HEK293T (cell line): ENCODE measurements at regions of chr1 and their contacts with region 1.

Region 1: DNA sequence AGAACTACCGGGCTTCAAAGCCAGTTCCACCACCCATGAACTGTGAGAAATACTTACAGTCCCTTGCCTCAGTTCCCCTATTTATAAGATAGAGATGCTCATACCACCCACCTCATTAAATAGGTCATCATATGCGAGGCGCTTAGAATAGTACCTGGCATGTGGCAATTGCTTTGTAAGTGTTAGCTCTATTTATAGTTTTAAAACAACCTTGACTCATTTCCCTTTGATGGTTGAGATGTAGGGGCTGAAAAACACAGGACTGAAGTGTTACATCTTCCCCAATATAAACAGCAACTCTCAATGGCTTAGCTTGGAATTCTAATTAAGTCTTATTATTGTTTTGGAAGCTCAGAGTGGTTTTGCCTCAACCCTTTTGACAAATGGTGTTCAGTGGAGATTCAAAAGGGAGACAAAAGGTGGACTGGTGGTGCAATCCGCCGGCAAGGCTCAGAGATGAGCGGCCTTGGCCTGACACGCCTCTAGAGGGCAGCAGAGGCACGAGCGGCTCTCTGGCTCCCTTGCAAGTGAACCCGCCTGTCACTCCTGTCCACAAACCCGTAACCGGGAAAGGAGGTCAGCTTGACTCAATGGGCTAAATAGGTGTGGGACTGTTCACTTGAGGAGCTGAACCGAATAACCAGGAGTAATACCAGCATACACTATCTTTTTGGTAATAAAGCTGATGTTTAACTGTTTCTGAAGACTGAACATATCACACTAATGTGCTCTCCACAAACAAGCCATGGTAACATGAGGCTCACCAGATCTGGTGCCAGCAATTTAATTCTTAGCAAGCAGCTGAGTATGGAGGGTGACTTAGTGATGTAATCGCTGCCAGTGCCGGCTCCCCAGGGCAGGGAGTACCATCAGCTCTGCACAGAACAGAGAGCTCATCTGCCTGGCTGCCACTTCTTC is 19.5 kb upstream of the SMYD2 start:
- DNase-seq: peak; percentile 90

Region 2: DNA sequence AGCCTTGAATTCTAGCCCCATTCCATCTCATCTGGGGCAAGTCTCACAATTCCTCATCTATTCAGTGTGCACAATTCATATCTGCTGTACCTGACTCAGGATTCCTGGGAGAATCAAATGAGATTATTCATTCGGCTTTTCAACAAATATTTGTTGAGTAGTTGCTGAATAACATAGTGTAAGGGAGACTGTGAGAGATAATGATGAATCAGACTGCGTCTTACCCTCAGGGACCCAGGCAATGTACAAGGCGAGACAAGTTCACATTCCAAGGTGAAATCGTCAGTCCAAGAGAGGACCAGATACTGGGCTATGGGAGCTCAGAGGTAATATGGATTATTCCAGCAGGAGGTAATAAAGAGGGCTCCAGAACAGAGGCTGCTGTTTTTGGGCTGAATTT is 48.3 kb before region 1 on chr1:
- CTCF ChIA-PET with region 1: interaction called, 10 read pairs
- POLR2A ChIA-PET with region 1: no interaction called
- DNase-seq: no peak

Region 3: DNA sequence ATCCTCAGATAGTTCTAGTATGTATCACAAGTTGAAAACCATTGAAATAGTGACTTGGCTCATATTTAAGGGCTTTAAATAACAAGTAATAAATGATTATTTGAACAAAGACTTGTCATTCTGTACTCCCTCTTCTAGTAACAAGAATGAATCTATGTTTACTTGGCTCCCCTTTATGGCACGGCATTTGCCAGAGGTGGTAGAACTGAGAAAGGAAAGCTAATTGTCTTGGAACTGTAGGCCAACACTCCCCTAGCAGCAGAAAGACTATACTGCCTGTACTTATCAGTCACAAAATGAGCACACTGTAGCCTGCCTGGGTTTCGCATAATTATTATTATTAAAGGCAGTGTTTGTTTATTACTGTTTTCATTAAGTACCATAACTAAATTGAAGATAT is 10.1 kb before region 1 on chr1:
- CTCF ChIA-PET with region 1: interaction called, 12 read pairs
- POLR2A ChIA-PET with region 1: no interaction called
- DNase-seq: no peak

Region 4: DNA sequence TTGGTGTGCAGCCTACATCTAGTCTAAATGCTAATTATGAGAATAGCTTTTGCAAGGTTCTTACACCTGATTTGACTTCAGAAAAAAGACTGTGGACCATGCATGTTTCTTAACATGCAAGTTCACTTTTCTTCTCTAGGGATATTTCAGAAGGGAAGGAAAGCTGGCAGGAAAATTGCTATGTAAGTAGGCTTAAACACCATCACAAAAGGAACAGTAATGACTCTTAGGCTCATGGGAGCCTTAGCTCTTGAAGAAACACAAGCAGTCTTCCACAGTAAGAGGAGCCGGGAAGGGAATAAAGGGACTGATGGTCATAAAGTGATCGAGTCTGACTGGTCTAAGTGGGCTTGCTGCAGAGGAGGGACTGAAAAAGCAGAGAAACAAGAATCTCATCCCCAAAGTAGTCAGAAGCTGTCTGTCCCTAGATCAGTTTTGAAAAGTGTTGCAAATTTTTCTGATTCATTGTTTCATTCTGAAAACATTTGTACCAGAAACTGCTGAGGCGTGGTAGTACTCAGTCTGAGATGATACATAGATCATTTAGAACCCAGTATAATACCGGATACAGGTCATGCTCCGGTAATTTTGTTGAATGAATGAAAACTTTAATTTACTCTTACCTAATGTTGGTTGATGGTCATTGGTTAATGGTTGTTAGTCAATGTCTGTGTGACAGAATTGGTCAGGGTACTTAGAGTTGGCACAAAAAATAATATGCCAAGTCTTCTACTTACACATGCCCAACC is 60.4 kb after region 1 on chr1:
- CTCF ChIA-PET with region 1: interaction called, 151 read pairs
- POLR2A ChIA-PET with region 1: interaction called, 4 read pairs
- DNase-seq: no peak